Activated naive CD4-positive, alpha-beta T cell treated with anti-CD3 and anti-CD28 coated beads, Interleukin-2, amount 10 ng/mL, durations not matched to agents 7 days and 5 days (primary cell): ENCODE measurements at regions of chr12 and their contacts with region 1.

Region 1: GRCh38 chr12:113208041-113208934 is 13.0 kb upstream of the TPCN1 start:
- DNase-seq: peak; percentile 78
- H3K4me3 Mint-ChIP-seq: peak overlapping the region; percentile 40
- H3K27ac Mint-ChIP-seq: peak overlapping the region; percentile 92
- H3K4me1 Mint-ChIP-seq: peaks cover 59% of the 10 kb centered on the region
- H3K27me3 Mint-ChIP-seq: no peaks in the 10 kb centered on the region

Region 2: GRCh38 chr12:113196996-113197395 is 11.3 kb before region 1 on chr12:
- CTCF ChIA-PET with region 1: interaction called, 11 read pairs
- DNase-seq: peak; percentile 77
- H3K4me3 Mint-ChIP-seq: no peak overlapping the region
- H3K27ac Mint-ChIP-seq: no peak overlapping the region
- H3K4me1 Mint-ChIP-seq: peaks cover 6% of the 10 kb centered on the region
- H3K27me3 Mint-ChIP-seq: no peaks in the 10 kb centered on the region

Region 3: GRCh38 chr12:113285679-113286610 is 77.7 kb after region 1 on chr12:
- CTCF ChIA-PET with region 1: no interaction called
- DNase-seq: no peak
- H3K4me3 Mint-ChIP-seq: no peak overlapping the region
- H3K27ac Mint-ChIP-seq: no peak overlapping the region
- H3K4me1 Mint-ChIP-seq: no peaks in the 10 kb centered on the region
- H3K27me3 Mint-ChIP-seq: no peaks in the 10 kb centered on the region